Lower leg skin (tissue), 4 donors: ENCODE measurements at regions of chr21 and their contacts with region 1.

Region 1: DNA sequence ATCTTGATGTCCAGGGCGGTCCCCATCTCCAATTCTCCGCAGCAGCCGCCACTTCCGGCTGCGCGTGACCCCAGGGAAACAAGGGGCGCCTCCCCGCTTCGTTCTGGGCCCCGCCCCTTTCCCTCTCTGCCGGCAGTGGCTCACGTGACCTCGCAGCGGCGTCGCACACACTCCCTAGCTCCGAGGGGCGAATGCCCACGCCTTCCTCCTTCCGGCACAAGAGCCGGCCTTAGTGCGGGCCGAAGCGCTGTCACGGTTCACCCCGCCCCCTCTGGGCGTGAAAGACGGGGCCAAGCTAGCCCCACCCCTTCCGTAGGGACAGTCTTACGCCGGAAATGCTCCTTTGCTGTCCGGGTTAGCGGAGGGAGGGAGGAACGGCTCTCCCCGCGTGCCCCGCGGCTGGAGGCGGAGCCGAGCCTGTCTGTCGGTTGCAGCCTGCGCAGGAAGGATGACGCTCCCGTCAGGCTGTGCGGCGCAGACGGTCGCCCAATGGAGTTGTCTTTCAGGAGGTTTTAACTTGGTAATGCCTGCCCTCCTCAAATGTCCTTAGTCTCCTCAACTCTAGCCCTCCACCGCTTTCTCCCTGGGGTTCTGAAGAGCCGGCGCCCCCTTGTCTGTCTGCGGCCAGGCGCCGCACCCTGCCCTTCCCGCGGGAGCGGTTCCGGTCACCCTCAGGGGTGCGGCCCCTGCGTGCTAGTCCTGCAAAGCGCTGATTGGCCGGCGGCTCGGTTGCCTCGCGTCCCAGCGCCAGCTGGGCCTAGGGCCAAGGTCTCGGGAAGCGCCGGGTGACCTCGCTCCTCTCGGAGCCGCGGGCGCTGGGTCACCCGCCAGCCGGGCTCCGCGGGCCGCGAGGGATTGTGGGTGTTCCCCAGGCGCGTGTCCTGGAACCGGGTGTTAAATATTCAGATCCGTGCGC is at the start of gene VPS26C:
- DNase-seq: peak; percentile 99 to 100
- H3K4me3 ChIP-seq: peak within 1 kb of the TSS; percentile 74
- CTCF ChIP-seq: no peak
- POLR2A ChIP-seq: peak in 1 of 2 donors; percentile 43
- total RNA-seq, gene VPS26C: 40.8 to 69.9 (median 49.2) TPM

Region 2: DNA sequence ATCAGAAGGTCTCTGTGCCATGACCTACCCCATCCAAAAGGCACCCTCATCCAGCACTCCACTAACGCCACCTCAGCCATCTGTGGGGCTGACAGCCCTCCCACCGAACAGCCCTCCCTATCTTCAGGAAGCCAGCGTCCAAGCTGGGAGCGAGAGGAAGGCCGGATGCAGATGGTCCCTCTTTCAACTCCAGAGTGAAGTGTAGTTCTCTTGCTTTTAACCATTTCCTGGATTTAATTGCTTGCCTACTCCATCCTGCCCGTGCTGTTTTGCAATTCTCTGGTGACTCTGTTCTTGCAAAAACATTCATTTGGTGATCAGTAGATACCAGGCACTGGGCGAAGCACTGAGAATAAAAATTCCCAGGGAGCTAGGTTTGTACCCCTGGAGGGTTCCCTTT is 90.9 kb after region 1 on chr21:
- intact Hi-C with region 1: loop called (anchors 10 kb)
- DNase-seq: no peak
- H3K4me3 ChIP-seq: no peak overlapping the region
- CTCF ChIP-seq: no peak
- POLR2A ChIP-seq: no peak